Heart right ventricle (tissue), 16 donors: ENCODE measurements at regions of chr9 and their contacts with region 1.

Region 1: GRCh38 chr9:68595868-68596267 is 55.2 kb upstream of the TMEM252 start:
- DNase-seq: no peak
- ATAC-seq: no peak
- H3K4me3 ChIP-seq: no peak overlapping the region
- H3K27ac ChIP-seq: no peak overlapping the region
- H3K4me1 ChIP-seq: no peaks in the 10 kb centered on the region
- H3K27me3 ChIP-seq: no peaks in the 10 kb centered on the region
- CTCF ChIP-seq: no peak

Region 2: DNA sequence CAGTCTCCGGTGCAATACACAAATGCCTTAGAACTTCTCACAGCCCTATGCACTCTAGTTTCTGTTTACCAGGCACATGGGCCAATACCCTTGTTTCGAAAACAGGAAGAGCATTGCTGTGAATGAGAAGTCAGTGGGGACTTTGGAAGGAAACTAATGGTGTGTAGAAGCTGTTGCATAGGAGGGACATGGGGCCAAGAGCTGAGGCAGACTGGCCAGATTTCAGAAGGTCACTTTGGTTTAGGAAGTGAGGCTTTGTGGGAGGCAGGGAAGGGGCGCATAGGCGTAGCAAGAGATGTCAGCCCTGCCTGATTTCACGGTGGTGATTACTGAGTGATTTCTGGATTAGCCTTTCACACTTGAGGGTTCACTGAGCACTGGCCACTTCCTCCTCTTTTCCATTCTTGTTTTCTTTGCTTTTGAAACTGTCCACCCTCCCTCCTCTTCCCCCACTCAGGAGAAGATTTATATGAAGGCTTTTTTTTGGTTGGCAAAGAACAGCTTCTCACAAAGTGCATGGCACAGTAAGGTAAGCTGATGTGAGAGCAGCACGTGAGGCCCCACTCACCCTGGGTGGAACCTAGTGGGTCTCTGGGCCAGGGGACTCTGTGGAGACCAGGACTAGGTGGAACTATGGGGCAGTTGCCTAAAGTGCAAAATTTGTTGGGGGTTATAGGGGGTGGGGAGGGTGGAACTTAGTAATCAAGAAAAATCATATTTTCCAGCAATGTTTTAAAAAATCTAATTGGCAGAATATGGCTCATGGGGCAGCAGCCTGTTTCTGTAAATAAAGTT is 49.1 kb before region 1 on chr9:
- intact Hi-C with region 1: no loop called
- DNase-seq: no peak
- ATAC-seq: peak; percentile 68 to 86 (median 77)
- H3K4me3 ChIP-seq: peak overlapping the region in 1 of 10 donors; percentile 15
- H3K27ac ChIP-seq: peak overlapping the region in 6 of 10 donors; percentile 1 to 88 (median 57)
- H3K4me1 ChIP-seq: peaks cover under 1 to 35% (median 13%) of the 10 kb centered on the region in 9 donors
- H3K27me3 ChIP-seq: no peaks in the 10 kb centered on the region
- CTCF ChIP-seq: no peak

Region 3: DNA sequence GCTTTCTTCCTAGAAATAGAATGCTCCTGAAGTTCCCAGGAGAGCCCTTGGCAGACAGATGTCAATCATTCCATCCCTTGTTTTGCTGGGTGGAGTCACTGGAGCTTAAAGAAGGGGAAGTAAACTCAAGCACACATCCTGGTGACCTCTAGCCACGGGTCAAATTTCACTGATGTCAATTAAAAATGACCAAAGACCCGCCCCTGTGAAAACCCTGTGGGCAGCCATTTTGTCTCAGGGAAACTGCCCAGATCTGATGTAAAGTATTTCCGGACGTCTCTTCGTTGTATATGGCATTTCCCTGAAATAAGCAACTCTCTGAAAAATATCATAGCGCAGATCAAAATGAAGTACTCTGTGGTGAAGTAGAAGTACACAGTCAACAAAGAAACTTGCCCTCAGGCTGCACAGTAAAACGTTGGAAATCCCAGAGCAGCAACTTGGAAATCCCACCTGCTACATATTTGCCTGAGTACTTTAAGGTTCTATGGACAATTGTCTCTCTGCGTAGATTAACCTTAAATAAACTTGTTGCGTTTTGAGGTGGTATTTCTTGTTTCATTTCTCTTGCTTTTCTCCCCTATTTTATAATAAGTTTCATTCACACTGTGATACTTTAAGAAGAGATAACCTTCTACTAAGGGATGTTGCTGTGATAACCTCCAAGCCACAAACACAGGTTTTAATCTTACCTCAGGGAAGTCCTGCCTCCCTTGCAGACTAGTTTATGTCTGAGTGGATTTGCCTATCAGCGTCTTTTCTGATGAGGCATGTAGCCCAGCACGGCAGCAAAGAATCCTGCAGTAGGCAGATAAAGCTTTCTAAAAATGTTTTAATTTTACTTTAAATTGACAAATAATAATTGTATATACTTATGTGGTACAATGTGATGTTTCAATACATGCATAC is 48.3 kb after region 1 on chr9:
- intact Hi-C with region 1: no loop called
- DNase-seq: no peak
- ATAC-seq: no peak
- H3K4me3 ChIP-seq: no peak overlapping the region
- H3K27ac ChIP-seq: no peak overlapping the region
- H3K4me1 ChIP-seq: peaks cover 0 to 4% (median 0%) of the 10 kb centered on the region in 9 donors
- H3K27me3 ChIP-seq: no peaks in the 10 kb centered on the region
- CTCF ChIP-seq: no peak

Region 4: DNA sequence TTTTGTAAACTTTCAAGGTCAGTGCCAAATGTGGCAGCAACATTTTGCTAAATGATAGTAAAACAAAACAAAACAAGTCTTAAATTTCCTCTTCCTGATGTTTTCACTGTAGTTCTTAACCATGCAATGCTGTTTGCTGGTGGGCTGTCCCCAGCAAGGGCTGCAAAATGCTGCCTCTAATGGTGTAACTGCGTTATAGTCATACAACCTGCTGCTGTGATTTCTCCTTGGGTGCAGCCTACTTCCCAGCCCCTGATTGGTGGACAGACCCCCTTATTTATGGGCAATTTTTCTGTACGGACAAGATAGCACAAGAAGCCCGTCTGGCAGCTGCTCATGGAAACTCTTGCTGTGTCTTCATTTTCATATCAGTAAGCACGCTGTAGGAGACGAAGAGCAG is 82.6 kb after region 1 on chr9:
- intact Hi-C with region 1: loop called in 1 of 10 experiments (anchors 10 kb)
- DNase-seq: peak in 1 of 2 donors; percentile 5
- ATAC-seq: peak in 6 of 8 donors; percentile 61 to 87 (median 75)
- H3K4me3 ChIP-seq: no peak overlapping the region
- H3K27ac ChIP-seq: no peak overlapping the region
- H3K4me1 ChIP-seq: peaks cover 0 to 21% (median 0%) of the 10 kb centered on the region in 9 donors
- H3K27me3 ChIP-seq: peaks cover 0 to 17% (median 4%) of the 10 kb centered on the region in 7 donors
- CTCF ChIP-seq: peak; percentile 20 to 59 (median 35)